ENCODE measurements at regions of chr17 and their contacts with region 1.

Region 1: DNA sequence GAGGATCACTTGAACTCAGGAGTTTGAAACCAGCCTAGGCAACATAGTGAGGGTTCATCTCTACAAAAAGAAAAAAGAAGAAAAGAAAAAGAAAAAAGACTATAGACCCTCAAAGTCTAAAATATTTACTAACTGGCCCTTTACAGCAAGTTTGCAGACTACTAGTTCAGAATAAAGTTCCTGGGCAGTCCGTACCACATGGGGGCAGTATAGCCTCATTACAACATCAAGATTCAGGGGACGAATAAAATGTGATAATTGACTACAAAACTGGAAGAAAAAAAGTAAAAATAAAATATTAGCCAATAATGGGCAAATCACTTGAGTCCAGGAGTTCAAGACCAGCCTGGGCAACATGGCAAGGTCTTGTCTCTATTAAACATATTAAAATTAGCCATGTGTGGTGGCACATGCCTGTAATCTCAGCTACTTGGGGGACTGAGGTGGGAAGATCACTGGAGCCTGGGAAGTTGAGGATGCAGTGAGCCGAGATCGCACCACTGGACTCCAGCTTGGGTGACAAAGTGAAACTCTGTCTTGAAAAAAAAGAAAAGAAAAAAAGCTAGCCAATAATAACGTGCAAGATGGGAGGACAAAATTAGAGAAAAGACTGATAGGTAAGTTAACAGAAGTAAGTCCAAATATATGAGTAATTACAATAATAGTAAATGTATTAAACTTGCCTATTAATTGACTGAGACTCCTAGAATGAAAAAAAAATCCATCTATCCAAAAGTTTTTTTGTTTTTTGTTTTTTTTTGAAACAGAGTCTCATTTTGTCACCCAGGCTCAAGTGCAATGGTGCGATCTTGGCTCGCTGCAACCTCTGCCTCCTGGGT is 129.4 kb upstream of the SEC14L1 start:
- DNase-seq: peak; percentile 65
- H3K4me3 Mint-ChIP-seq: no peak overlapping the region
- H3K27ac Mint-ChIP-seq: no peak overlapping the region
- H3K4me1 Mint-ChIP-seq: no peaks in the 10 kb centered on the region
- H3K27me3 Mint-ChIP-seq: peaks cover 5% of the 10 kb centered on the region

Region 2: GRCh38 chr17:76968707-76969597 is 42.4 kb before region 1 on chr17:
- CTCF ChIA-PET with region 1: no interaction called
- POLR2A ChIA-PET with region 1: no interaction called
- intact Hi-C with region 1: loop called (anchors 10 kb)
- DNase-seq: peak; percentile 75
- H3K4me3 Mint-ChIP-seq: peak overlapping the region; percentile 65
- H3K27ac Mint-ChIP-seq: no peak overlapping the region
- H3K4me1 Mint-ChIP-seq: peaks cover 12% of the 10 kb centered on the region
- H3K27me3 Mint-ChIP-seq: peaks cover 2% of the 10 kb centered on the region

Region 3: GRCh38 chr17:77247048-77247541 is 235.7 kb after region 1 on chr17:
- CTCF ChIA-PET with region 1: interaction called, 3 read pairs
- POLR2A ChIA-PET with region 1: no interaction called
- intact Hi-C with region 1: loop called (anchors 1 kb)
- DNase-seq: peak; percentile 88
- H3K4me3 Mint-ChIP-seq: peak overlapping the region; percentile 50
- H3K27ac Mint-ChIP-seq: no peak overlapping the region
- H3K4me1 Mint-ChIP-seq: peaks cover 9% of the 10 kb centered on the region
- H3K27me3 Mint-ChIP-seq: peaks cover 14% of the 10 kb centered on the region